ENCODE measurements at regions of chr19 and their contacts with region 1.

Region 1: GRCh38 chr19:46759817-46760333 is 13.6 kb upstream of the STRN4 start:
- DNase-seq: peak; percentile 68
- H3K4me3 Mint-ChIP-seq: no peak overlapping the region
- H3K27ac Mint-ChIP-seq: no peak overlapping the region
- H3K4me1 Mint-ChIP-seq: peaks cover 12% of the 10 kb centered on the region
- H3K27me3 Mint-ChIP-seq: no peaks in the 10 kb centered on the region
- CTCF ChIP-seq: no peak

Region 2: GRCh38 chr19:46736544-46737297 is 23.2 kb before region 1 on chr19:
- CTCF ChIA-PET with region 1: no interaction called
- POLR2A ChIA-PET with region 1: no interaction called
- intact Hi-C with region 1: no loop called
- DNase-seq: no peak
- H3K4me3 Mint-ChIP-seq: no peak overlapping the region
- H3K27ac Mint-ChIP-seq: no peak overlapping the region
- H3K4me1 Mint-ChIP-seq: peaks cover 16% of the 10 kb centered on the region
- H3K27me3 Mint-ChIP-seq: no peaks in the 10 kb centered on the region
- CTCF ChIP-seq: no peak

Region 3: GRCh38 chr19:46772170-46773017 is 12.5 kb after region 1 on chr19:
- CTCF ChIA-PET with region 1: interaction called, 15 read pairs
- POLR2A ChIA-PET with region 1: interaction called, 9 read pairs
- intact Hi-C with region 1: no loop called
- DNase-seq: no peak
- H3K4me3 Mint-ChIP-seq: no peak overlapping the region
- H3K27ac Mint-ChIP-seq: no peak overlapping the region
- H3K4me1 Mint-ChIP-seq: no peaks in the 10 kb centered on the region
- H3K27me3 Mint-ChIP-seq: no peaks in the 10 kb centered on the region
- CTCF ChIP-seq: no peak